Cardiac septum (tissue), 1 donor: ENCODE measurements at regions of chr1 and their contacts with region 1.

Region 1: GRCh38 chr1:95043141-95043980 is 29.4 kb downstream of the ALG14 start:
- DNase-seq: peak; percentile 91

Region 2: GRCh38 chr1:94821636-94822305 is 221.6 kb before region 1 on chr1:
- intact Hi-C with region 1: no loop called
- DNase-seq: no peak

Region 3: GRCh38 chr1:94854458-94855306 is 188.7 kb before region 1 on chr1:
- intact Hi-C with region 1: loop called (anchors 1 kb)
- DNase-seq: peak; percentile 93

Region 4: GRCh38 chr1:94947437-94947836 is 95.9 kb before region 1 on chr1:
- intact Hi-C with region 1: no loop called
- DNase-seq: no peak